Transverse colon (tissue), 4 donors: ENCODE measurements at regions of chr5 and their contacts with region 1.

Region 1: DNA sequence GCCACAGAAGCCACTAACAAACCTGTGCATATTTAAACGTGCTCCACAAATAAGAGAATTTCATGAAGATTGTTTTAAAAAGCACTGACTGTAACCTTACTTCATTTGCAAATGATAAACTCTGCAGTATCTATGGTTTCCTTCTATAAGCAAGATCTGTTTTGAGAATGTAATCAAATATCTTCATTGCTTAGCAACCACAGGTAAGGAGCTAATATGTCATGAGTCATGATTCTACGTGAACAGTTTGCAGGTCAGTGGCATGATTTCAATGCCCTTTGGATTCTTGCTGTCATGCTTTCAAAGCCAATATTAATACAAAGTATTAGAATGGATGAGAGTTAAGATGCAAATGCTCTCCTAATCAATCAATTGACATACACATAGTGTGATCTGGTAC is 325.0 kb downstream of the EDIL3 start:
- DNase-seq: no peak
- H3K4me3 ChIP-seq: no peak overlapping the region
- H3K27ac ChIP-seq: no peak overlapping the region
- H3K4me1 ChIP-seq: no peaks in the 10 kb centered on the region
- H3K27me3 ChIP-seq: no peaks in the 10 kb centered on the region
- CTCF ChIP-seq: no peak
- EP300 ChIP-seq: no peak
- POLR2A ChIP-seq: no peak

Region 2: GRCh38 chr5:82597437-82597836 is 1462.2 kb before region 1 on chr5:
- in situ Hi-C with region 1: no loop called
- intact Hi-C with region 1: loop called (anchors 5 kb)
- DNase-seq: no peak
- H3K4me3 ChIP-seq: no peak overlapping the region
- H3K27ac ChIP-seq: no peak overlapping the region
- H3K4me1 ChIP-seq: peaks cover 3 to 32% (median 13%) of the 10 kb centered on the region in 4 donors
- H3K27me3 ChIP-seq: no peaks in the 10 kb centered on the region
- CTCF ChIP-seq: no peak
- EP300 ChIP-seq: no peak
- POLR2A ChIP-seq: no peak